Tibial artery (tissue), 4 donors: ENCODE measurements at regions of chr6 and their contacts with region 1.

Region 1: GRCh38 chr6:103036846-103037245 is 1643.3 kb downstream of the GRIK2 start:
- DNase-seq: no peak
- H3K4me3 ChIP-seq: no peak overlapping the region
- H3K27ac ChIP-seq: no peak overlapping the region
- H3K4me1 ChIP-seq: no peaks in the 10 kb centered on the region
- H3K27me3 ChIP-seq: no peaks in the 10 kb centered on the region
- CTCF ChIP-seq: no peak

Region 2: GRCh38 chr6:103047567-103047966 is 10.7 kb after region 1 on chr6:
- intact Hi-C with region 1: loop called (anchors 1 kb)
- DNase-seq: no peak
- H3K4me3 ChIP-seq: no peak overlapping the region
- H3K27ac ChIP-seq: no peak overlapping the region
- H3K4me1 ChIP-seq: no peaks in the 10 kb centered on the region
- H3K27me3 ChIP-seq: no peaks in the 10 kb centered on the region
- CTCF ChIP-seq: no peak